ENCODE measurements at regions of chr5 and their contacts with region 1.

Region 1: GRCh38 chr5:118791926-118792734 is 196.2 kb downstream of the DTWD2 start:
- H3K4me3 Mint-ChIP-seq: no peak overlapping the region
- H3K27ac Mint-ChIP-seq: no peak overlapping the region
- H3K4me1 Mint-ChIP-seq: peaks cover 2% of the 10 kb centered on the region
- H3K27me3 Mint-ChIP-seq: no peaks in the 10 kb centered on the region

Region 2: DNA sequence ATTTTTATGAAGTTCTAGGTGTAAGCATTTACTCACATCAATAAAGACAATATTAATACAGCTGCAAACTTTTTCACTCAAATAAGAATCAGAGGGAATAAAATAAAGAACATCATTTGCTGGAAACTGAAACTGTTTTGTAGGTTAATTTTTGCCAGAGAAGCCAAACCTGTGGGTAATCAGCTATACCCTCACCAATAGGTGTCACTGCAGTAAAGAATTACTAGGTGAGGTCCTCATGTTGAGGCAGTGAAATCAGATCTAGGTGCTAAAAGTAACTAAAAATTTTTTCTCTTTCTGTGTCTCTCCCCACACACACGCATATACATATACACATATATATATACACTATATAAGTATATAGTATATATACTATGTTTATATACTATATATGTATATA is 1201.2 kb before region 1 on chr5:
- intact Hi-C with region 1: loop called (anchors 5 kb)
- H3K4me3 Mint-ChIP-seq: no peak overlapping the region
- H3K27ac Mint-ChIP-seq: no peak overlapping the region
- H3K4me1 Mint-ChIP-seq: no peaks in the 10 kb centered on the region
- H3K27me3 Mint-ChIP-seq: no peaks in the 10 kb centered on the region